Left cardiac atrium (tissue), 4 donors: ENCODE measurements at regions of chr15 and their contacts with region 1.

Region 1: DNA sequence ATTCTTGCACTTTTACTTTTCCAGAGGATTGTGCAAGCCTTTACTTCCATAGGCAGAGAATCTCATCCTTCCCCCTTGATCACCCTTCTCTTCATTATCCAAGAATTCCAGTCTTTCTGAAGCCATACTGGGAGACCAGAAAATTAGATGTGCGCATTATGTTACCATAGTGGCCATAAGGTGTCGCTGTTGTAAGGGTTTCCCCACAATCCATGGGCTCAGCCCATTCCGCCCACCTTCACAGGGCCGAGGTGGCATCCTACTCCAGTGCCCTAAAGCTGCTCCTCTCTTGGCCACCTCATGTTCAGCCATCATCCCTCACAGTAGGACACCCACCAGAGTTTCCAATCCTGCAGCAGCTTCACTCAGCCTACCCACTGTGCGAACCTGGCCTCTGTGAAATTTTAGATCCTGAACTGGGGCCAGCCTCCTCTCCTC is 35.0 kb downstream of the CTSH start:
- DNase-seq: no peak
- ATAC-seq: peak in 1 of 2 donors; percentile 44

Region 2: DNA sequence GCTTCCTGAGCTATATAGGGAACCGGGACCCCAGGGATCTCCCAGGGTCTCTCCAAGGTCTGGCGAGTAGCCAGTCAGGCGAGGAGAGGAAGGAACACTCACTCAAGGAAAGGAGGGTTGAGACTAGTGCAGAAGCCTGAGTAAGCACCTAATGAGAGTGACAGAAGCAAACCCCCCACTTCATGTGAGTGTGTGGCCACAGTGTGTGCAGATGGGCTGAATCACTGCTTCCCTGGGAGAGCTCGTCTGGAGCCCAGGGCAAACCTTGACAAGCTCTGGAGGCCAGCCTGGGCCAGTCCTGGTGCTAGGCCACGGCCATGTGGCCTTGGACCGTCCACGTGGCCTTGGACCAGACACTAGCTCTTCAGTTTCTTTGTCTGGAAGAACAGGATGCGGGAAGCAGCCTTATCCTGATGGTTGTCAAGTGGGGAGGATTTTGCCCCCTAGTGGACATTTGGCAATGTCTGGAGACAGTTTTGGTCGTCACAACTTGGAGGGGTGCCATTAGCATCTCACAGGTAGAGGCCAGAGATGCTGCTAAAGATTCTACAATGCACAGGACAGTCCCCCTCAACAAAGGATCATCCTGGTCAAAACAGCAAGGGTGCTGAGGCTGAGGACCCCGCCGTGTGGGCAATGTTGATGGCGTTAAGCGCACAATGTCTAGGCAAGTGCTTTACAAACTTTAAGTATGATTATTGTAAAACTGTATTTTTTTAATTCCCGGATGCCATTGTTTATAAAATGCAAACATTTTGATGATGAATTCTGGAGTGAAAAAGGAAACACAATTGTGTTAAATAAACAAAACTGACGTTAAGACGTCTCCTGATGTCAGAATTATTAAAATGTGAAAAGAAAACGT is 69.9 kb after region 1 on chr15:
- intact Hi-C with region 1: loop called (anchors 5 kb)
- DNase-seq: peak; percentile 67
- ATAC-seq: peak; percentile 60 to 62

Region 3: DNA sequence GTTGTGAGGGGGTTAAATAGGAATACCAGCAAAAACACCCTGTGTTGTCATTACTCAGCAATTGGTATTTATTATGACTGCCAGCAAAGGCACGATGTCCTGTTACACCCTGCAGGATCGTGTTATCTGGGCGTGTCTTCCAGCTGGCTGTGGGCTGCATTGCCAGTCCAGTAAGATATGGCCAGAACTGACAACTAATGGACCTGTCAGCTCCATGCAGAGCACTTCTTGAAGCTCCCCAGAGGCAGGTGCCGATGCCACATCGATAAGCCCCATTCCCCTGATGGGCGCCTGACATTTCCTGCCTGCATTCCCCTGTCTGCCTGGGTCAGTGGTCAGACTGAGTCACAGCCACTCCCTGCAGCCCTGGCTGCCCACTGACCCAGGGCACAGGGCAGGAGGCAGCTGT is 260.4 kb after region 1 on chr15:
- intact Hi-C with region 1: loop called in 1 of 2 experiments (anchors 10 kb)
- DNase-seq: peak; percentile 55
- ATAC-seq: peak; percentile 84 to 89